CD4-positive, alpha-beta memory T cell (primary cell): ENCODE measurements at regions of chr14 and their contacts with region 1.

Region 1: DNA sequence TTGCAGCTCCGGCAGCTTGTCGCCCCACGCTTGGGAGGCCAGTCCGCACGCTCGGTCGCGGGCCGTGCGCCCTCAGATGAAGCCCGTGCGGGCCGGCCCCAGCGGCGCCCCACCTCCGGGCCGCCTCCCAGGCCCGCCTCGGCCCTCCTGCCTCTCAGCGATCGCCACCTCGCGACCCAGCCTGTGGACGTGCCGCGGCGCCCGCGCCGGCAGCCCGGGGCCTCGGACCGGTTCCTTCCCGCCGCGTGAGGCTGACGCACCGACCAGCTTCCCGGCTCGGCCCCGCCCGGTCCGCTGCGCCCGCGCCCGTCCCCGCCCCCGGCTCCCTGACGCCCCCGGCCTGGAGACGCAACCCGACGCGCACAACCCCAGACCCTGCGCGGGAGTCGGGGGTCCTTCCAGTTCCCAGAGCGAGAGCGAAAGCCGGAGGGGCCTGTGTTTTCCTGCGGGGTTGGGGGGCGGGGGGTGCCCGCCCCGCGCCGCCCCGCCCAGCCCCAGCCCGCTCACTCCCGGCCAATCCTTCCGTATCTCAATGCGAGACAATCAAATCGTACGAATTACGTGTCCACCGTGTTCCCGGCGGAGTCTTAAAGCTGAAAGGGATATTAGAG is at the start of gene ERO1A:
- DNase-seq: peak; percentile 56 to 71 (median 60)
- H3K4me3 ChIP-seq: peak within 1 kb of the TSS; percentile 96 to 99
- H3K4me3 Mint-ChIP-seq: peak within 1 kb of the TSS; percentile 98 to 100 (median 99)
- H3K27ac ChIP-seq: peak within 1 kb of the TSS; percentile 81
- H3K27ac Mint-ChIP-seq: peak within 1 kb of the TSS; percentile 88 to 99 (median 98)
- H3K4me1 ChIP-seq: peaks cover 39% of the 10 kb centered on the region
- H3K4me1 Mint-ChIP-seq: peaks cover 26 to 47% (median 40%) of the 10 kb centered on the region in 4 donors
- H3K27me3 ChIP-seq: no peaks in the 10 kb centered on the region
- H3K27me3 Mint-ChIP-seq: no peaks in the 10 kb centered on the region
- total RNA-seq, gene ERO1A: 93.8 to 98.3 TPM

Region 2: GRCh38 chr14:52684065-52684464 is 11.5 kb before region 1 on chr14:
- CTCF ChIA-PET with region 1: interaction called, 3 read pairs
- POLR2A ChIA-PET with region 1: interaction called, 7 read pairs
- intact Hi-C with region 1: loop called (anchors 1 kb)
- DNase-seq: no peak
- H3K4me3 ChIP-seq: no peak overlapping the region
- H3K4me3 Mint-ChIP-seq: peak overlapping the region in 5 of 8 donors; percentile 7 to 55 (median 26)
- H3K27ac ChIP-seq: no peak overlapping the region
- H3K27ac Mint-ChIP-seq: peak overlapping the region; percentile 10 to 84 (median 22)
- H3K4me1 ChIP-seq: peaks cover 53% of the 10 kb centered on the region
- H3K4me1 Mint-ChIP-seq: peaks cover 37 to 61% (median 49%) of the 10 kb centered on the region in 4 donors
- H3K27me3 ChIP-seq: no peaks in the 10 kb centered on the region
- H3K27me3 Mint-ChIP-seq: no peaks in the 10 kb centered on the region

Region 3: DNA sequence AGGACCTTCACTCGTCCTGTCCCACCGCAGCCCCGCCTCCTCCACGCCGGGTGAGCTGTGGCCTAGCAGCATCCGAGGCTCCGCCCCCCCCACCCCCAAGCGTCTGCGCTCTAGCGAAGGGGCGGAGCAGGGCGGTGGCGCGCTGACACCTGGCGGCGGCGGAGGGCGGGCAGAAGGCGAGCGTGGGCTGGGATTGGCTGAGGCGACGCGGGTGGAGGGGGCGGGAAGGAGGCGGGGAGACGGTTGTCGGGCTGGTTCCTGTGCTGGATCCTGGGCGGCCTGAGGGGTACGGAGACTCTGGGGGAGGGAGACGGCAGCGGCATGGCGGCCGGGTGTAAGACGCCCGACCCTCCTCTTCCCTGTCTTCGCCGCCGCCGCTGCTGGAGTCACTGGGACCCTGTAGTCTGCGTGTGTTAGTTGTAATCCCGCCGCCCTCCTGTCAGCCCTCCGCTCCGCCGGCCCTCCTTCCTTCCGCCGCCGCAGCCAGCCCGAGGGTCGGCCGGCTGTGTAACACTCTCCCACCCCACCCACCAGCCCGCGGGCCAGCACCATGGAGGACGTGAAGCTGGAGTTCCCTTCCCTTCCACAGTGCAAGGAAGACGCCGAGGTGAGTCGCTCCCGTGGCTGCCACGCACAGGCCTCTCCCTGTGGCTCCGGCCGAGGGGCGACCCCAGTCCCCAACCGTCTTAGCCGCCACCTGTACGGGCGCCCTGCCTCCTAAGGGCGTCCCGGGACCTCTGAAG is 34.5 kb after region 1 on chr14 and contains the start of gene STYX:
- CTCF ChIA-PET with region 1: no interaction called
- POLR2A ChIA-PET with region 1: interaction called, 16 read pairs
- intact Hi-C with region 1: loop called (anchors 1 kb)
- DNase-seq: peak; percentile 95 to 97 (median 96)
- H3K4me3 ChIP-seq: peak within 1 kb of the TSS; percentile 71
- H3K4me3 Mint-ChIP-seq: peak within 1 kb of the TSS; percentile 80 to 96 (median 93)
- H3K27ac ChIP-seq: peak within 1 kb of the TSS; percentile 88
- H3K27ac Mint-ChIP-seq: peak within 1 kb of the TSS; percentile 79 to 97 (median 95)
- H3K4me1 ChIP-seq: peaks cover 36% of the 10 kb centered on the region
- H3K4me1 Mint-ChIP-seq: peaks cover 17 to 53% (median 38%) of the 10 kb centered on the region in 4 donors
- H3K27me3 ChIP-seq: no peaks in the 10 kb centered on the region
- H3K27me3 Mint-ChIP-seq: no peaks in the 10 kb centered on the region
- total RNA-seq, gene STYX: 47.1 to 47.3 TPM

Region 4: DNA sequence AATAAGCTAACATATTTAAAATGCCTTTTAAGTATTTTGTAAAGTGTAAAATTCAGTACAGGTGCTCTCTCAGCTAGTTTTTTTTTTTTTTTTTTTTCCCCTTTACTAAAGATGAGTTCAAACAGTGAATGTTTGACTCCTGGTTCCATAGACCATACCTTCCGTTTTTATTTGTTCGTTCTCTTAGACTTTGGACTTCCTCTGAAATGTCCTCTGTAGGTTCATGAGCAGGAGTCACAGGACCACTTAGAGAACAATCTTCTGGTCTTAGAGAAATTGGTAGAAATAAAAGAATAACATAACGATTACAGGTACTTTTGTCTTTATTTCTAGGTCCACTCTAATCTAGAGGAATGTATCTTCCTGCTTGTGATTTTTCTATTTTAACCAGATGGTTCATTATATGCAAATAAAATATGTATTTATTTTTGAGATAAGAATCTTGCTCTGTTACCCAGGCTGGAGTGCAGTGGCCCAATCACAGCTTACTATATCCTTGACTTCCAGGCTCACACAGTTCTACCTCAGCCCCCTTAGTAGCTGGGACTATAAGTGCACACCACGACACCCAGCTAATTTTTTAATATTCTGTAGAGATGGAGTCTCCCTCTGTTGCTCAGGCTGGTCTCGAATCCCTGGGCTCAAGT is 60.1 kb after region 1 on chr14:
- CTCF ChIA-PET with region 1: no interaction called
- POLR2A ChIA-PET with region 1: interaction called, 3 read pairs
- intact Hi-C with region 1: loop called (anchors 5 kb)
- DNase-seq: no peak
- H3K4me3 ChIP-seq: no peak overlapping the region
- H3K4me3 Mint-ChIP-seq: no peak overlapping the region
- H3K27ac ChIP-seq: no peak overlapping the region
- H3K27ac Mint-ChIP-seq: no peak overlapping the region
- H3K4me1 ChIP-seq: no peaks in the 10 kb centered on the region
- H3K4me1 Mint-ChIP-seq: peaks cover 0 to 3% (median 2%) of the 10 kb centered on the region in 4 donors
- H3K27me3 ChIP-seq: no peaks in the 10 kb centered on the region
- H3K27me3 Mint-ChIP-seq: no peaks in the 10 kb centered on the region

Region 5: GRCh38 chr14:52950898-52951689 is 255.5 kb after region 1 on chr14 and contains the start of gene FERMT2:
- CTCF ChIA-PET with region 1: no interaction called
- POLR2A ChIA-PET with region 1: no interaction called
- intact Hi-C with region 1: loop called (anchors 10 kb)
- DNase-seq: peak in 4 of 5 donors; percentile 6 to 25 (median 11)
- H3K4me3 ChIP-seq: peak within 1 kb of the TSS; percentile 47 to 49
- H3K4me3 Mint-ChIP-seq: peak within 1 kb of the TSS; percentile 79 to 91 (median 85)
- H3K27ac ChIP-seq: no peak within 1 kb of the TSS
- H3K27ac Mint-ChIP-seq: peak within 1 kb of the TSS in 6 of 7 donors; percentile 5 to 65 (median 37)
- H3K4me1 ChIP-seq: peaks cover 20% of the 10 kb centered on the region
- H3K4me1 Mint-ChIP-seq: peaks cover 18 to 27% (median 21%) of the 10 kb centered on the region in 4 donors
- H3K27me3 ChIP-seq: peaks cover 45% of the 10 kb centered on the region
- H3K27me3 Mint-ChIP-seq: peaks cover 34 to 36% of the 10 kb centered on the region in 2 donors
- total RNA-seq, gene FERMT2: 0.75 to 0.79 TPM